Activated naive CD4-positive, alpha-beta T cell treated with anti-CD3 and anti-CD28 coated beads, Interleukin-2, amount 10 ng/mL, durations not matched to agents 7 days and 5 days (primary cell): ENCODE measurements at regions of chr6 and their contacts with region 1.

Region 1: DNA sequence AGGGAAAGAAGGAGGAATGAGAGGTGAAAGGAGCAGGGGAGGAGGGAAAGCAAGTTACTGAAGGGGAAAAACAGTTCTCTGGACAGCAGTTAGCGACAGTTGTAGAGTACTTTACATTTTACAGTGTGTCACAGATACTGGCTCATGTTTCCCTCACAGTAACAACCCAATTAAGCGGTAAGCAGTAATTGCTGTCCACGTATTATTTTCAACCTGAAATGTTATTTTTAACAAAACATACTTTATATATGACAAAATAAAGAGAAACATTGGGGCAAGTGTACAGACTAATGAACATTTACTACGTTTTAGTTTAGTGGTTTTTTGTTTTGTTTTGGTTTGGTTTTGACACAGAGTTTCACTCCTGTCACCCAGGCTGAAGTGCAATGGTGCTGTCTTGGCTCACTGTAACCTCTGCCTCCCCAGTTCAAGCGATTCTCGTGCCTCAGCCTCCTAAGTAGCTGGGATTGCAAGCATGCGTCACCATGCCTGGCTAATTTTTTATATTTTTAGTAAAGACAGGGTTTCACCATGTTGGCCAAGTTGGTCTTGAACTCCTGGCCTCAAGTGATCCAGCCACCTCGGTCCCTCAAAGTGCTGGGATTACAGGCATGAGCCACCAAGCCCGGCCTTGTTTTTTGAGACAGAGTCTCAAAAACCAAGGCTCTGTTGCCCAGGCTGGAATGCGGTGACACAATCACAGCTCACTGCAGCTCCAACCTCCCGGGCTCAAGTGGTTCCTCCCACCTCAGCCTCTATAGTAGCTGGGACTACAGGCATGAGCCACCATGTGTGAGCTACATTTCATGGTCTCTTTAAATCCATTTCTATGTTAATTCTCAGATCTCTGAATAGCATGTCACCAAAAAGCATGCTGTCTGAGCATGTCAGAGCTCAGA is 22.6 kb upstream of the BTN3A2 start:
- DNase-seq: peak; percentile 34
- H3K4me3 Mint-ChIP-seq: peak overlapping the region; percentile 70
- H3K27ac Mint-ChIP-seq: peak overlapping the region; percentile 16
- H3K4me1 Mint-ChIP-seq: peaks cover 14% of the 10 kb centered on the region
- H3K27me3 Mint-ChIP-seq: peaks cover 37% of the 10 kb centered on the region

Region 2: DNA sequence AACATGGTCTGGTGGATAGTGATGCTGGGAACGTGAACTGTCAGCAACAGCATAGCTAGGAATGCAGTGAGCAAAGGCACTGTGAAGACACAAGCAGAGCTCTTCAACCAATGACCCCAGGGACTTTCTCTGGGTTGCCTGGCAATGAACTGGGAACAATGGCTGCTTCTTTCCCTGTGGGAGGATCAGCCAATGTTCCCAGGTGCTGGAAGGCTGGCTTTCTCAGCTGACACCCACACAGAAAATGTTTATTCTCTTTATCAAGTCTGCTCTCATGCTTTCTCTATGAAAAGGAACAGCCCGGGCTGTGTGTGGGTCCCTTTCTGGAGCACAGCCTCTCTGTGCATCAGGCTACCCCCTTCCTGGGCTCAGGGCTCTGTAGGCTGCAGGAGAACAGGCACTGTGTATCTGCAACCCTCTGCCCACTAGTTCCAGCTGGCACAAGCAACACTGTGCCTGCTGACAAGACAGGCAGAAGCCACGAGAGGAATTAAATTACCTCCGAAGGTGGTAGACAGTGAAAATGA is 200.9 kb before region 1 on chr6:
- CTCF ChIA-PET with region 1: no interaction called
- DNase-seq: no peak
- H3K4me3 Mint-ChIP-seq: no peak overlapping the region
- H3K27ac Mint-ChIP-seq: no peak overlapping the region
- H3K4me1 Mint-ChIP-seq: peaks cover 6% of the 10 kb centered on the region
- H3K27me3 Mint-ChIP-seq: no peaks in the 10 kb centered on the region

Region 3: DNA sequence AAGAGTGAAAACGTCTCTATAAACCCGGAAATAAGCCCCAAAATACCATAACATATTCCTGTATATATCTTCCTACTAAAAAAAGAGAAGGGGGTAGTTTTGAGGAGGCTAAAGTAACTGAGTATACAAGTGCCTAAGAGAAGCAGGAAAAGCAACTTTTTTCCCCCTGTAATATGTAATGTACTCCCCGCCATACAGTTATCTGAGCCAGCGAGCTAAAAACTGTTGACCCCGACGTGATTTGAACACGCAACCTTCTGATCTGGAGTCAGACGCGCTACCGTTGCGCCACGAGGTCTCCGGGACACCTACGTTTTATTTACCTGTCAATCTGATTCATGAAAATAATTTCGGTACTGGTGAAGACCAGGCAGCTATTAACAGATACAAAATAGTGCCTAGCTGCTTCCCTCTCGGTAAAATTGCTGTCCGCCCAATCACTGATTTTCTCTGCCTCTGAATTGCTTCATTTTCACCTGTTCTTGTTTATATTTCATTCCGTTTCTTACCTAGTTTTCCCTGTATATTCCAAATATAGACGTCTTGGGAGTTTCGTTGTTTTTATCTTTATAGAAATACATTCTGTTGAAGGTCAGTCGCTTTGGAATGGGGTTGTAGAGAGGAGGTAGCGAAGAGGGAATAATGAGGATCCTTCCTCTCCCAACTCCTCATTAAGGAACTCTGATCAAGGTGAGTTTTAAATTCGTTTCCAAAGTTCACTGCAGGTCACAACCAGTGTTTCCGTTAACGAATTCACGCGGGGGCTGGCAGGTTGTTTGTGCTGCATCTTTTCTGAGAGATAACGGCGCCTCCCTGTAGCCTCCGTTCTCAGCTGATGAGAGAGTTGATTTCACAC is 10.9 kb before region 1 on chr6:
- CTCF ChIA-PET with region 1: interaction called, 17 read pairs
- DNase-seq: peak; percentile 59
- H3K4me3 Mint-ChIP-seq: peak overlapping the region; percentile 64
- H3K27ac Mint-ChIP-seq: peak overlapping the region; percentile 33
- H3K4me1 Mint-ChIP-seq: peaks cover 60% of the 10 kb centered on the region
- H3K27me3 Mint-ChIP-seq: peaks cover 63% of the 10 kb centered on the region

Region 4: DNA sequence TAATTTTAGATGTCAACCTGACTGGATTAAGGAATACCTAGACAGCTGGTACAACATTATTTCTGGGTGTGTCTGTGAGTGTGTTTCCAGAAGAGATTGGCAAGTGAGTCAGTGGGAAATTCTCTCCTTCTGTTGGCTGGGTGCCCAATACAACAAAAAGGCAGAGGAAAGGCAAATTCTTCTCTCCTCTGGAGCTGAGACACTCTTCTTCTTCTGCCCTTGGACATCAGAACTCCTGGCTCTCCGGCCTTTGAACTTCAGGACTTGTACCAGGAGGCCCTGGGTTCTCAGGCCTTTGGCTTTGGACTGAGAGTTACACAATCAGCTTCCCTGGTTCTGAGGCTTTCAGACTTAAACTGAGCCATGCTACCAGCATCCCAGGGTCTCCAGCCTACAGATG is 51.9 kb after region 1 on chr6:
- CTCF ChIA-PET with region 1: no interaction called
- DNase-seq: no peak
- H3K4me3 Mint-ChIP-seq: no peak overlapping the region
- H3K27ac Mint-ChIP-seq: no peak overlapping the region
- H3K4me1 Mint-ChIP-seq: peaks cover 1% of the 10 kb centered on the region
- H3K27me3 Mint-ChIP-seq: no peaks in the 10 kb centered on the region

Region 5: DNA sequence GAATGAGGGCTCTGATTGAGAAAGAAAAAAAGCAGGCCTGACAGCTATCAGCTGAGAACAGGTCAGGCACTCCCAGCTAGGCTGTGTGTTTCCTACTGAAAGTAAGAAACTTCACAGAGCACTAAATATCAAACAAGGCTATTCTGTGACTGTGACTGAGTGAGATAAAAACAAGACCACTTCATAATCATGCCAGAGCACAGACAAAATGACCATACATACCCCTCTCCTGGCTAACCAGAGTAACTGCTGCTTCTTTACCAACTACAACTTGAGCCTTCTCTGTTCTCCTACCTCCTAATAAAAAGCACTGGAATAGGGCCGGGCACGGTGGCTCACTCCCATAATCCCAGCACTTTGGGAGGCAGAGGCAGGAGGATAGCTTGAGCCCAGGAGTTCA is 150.9 kb after region 1 on chr6:
- CTCF ChIA-PET with region 1: interaction called, 11 read pairs
- DNase-seq: no peak
- H3K4me3 Mint-ChIP-seq: no peak overlapping the region
- H3K27ac Mint-ChIP-seq: no peak overlapping the region
- H3K4me1 Mint-ChIP-seq: peaks cover 22% of the 10 kb centered on the region
- H3K27me3 Mint-ChIP-seq: peaks cover 12% of the 10 kb centered on the region

Region 6: DNA sequence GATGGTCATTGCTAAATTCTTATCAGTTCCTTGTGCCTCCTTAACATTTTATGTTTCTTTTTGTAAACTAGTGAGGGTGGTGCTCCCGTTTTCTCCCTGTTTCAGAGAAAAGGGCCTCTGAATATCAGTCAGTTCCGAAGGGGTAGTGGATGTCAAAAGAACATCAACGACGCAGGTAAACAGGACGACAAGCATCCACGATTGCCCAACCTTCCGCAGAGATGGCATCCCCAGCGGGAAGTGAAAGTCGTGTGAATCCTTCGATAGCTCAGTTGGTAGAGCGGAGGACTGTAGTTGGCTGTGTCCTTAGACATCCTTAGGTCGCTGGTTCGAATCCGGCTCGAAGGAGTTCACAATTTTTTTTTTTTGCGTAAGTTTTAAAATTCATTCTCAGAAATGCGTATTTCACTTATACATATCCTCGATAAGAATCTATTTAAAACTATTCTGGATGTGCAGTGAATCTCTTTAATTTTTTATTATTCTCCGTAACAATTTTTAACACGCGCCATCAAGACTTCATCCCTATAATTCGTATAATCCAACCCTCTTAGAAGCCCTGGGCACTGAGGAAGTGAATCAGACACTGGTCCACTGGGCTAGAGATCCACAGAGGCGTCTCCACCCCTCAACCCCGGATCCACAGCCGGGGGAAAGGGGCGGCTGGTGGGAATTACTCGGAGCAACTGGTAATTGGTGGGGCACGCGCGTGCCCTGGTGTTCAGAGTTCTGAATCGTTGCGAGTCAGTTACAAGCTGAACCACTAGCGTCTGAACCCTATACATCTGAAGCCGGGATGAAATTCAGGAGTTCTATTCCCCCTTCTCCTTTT is 226.5 kb after region 1 on chr6:
- CTCF ChIA-PET with region 1: interaction called, 24 read pairs
- DNase-seq: peak; percentile 98
- H3K4me3 Mint-ChIP-seq: peak overlapping the region; percentile 88
- H3K27ac Mint-ChIP-seq: peak overlapping the region; percentile 93
- H3K4me1 Mint-ChIP-seq: peaks cover 38% of the 10 kb centered on the region
- H3K27me3 Mint-ChIP-seq: peaks cover 26% of the 10 kb centered on the region

Region 7: DNA sequence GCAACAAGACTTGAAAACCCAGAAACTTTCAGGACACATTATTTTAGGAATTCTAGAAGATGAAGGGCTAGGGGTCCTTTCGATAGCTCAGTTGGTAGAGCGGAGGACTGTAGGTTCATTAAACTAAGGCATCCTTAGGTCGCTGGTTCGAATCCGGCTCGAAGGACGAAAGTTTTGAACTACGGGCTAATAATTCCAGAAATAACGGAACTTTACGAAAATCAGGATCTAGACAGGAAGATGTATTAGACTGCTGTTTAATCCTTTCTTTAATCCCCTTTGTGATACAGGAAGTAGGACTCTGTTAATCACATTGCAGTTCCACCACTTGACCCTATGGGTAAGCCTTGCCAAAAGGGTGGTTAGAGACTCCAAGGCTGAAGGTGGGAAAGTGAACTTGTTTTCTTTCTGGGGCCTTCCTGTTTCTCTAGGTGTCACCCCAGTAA is 233.2 kb after region 1 on chr6:
- CTCF ChIA-PET with region 1: interaction called, 24 read pairs
- DNase-seq: no peak
- H3K4me3 Mint-ChIP-seq: no peak overlapping the region
- H3K27ac Mint-ChIP-seq: no peak overlapping the region
- H3K4me1 Mint-ChIP-seq: peaks cover 37% of the 10 kb centered on the region
- H3K27me3 Mint-ChIP-seq: peaks cover 41% of the 10 kb centered on the region

Region 8: GRCh38 chr6:26596579-26597388 is 254.4 kb after region 1 on chr6 and contains the start of gene ABT1:
- CTCF ChIA-PET with region 1: interaction called, 29 read pairs
- DNase-seq: peak; percentile 98
- H3K4me3 Mint-ChIP-seq: no peak within 1 kb of the TSS
- H3K27ac Mint-ChIP-seq: no peak within 1 kb of the TSS
- H3K4me1 Mint-ChIP-seq: peaks cover 43% of the 10 kb centered on the region
- H3K27me3 Mint-ChIP-seq: peaks cover 31% of the 10 kb centered on the region